GM12878 (cell line): ENCODE measurements at regions of chr11 and their contacts with region 1.

Region 1: GRCh38 chr11:1572197-1573076 is at the start of gene DUSP8:
- DNase-seq: no peak
- ATAC-seq: peak; percentile 68
- H3K4me3 ChIP-seq: no peak within 1 kb of the TSS
- H3K27ac ChIP-seq: no peak within 1 kb of the TSS
- H3K4me1 ChIP-seq: no peaks in the 10 kb centered on the region
- H3K27me3 ChIP-seq: peaks cover 3 to 10% of the 10 kb centered on the region in 2 experiments; a peak in 3 of 4 replicates
- CTCF ChIP-seq: no peak
- EP300 ChIP-seq: no peak
- POLR2A ChIP-seq: 0 out of 2 replicates have a peak, but pooled peaks have one; percentile 29
- RAD21 ChIP-seq: no peak
- polyA plus RNA-seq, gene DUSP8: not detected

Region 2: DNA sequence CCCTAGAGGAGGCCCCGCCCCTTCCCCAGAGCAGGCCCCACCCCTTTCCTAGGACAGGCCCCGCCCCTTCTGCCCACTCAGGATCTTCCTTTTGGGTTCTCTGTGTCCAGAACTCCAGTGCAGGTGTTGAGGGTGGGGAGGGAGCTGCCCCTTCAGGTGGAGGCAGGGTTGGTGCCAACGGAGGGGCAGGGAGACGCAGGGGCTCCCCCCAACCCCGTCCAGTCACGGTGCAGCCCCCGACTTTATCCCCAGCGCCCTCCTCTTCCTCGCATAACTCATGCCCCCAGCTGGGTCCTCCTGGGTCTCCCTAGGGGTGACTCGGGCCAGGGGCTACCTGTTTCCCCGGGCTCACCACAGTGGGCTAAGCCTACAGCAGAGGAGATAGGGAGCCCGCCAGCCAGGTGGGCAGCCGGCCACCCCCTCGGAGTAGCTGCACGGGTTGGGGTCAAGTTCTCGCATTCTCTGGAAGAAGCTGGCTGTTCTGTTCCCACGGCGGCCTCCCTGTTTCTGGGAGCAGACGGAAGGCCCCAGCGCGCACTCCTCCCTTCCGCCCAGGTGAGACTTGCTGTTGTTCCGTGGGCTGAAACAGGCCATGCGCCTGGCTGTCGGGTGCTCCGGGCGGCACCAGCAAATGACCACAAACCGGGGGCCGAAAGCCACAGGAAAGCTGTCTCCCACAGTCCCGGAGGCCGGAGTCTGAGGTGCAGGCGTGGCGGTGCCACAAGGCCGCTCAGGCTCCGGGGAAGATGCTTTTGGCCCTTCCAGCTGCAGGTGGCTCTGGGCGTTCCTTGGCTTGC is 458.8 kb before region 1 on chr11:
- CTCF ChIA-PET with region 1: interaction called, 4 read pairs
- POLR2A ChIA-PET with region 1: no interaction called
- RAD21 ChIA-PET with region 1: interaction called, 3 read pairs
- SMC1A ChIA-PET with region 1: interaction called, 3 read pairs
- in situ Hi-C with region 1: no loop called
- intact Hi-C with region 1: loop called (anchors 10 kb)
- DNase-seq: no peak
- ATAC-seq: no peak
- H3K4me3 ChIP-seq: no peak overlapping the region
- H3K27ac ChIP-seq: no peak overlapping the region
- H3K4me1 ChIP-seq: no peaks in the 10 kb centered on the region
- H3K27me3 ChIP-seq: no peaks in the 10 kb centered on the region
- CTCF ChIP-seq: no peak
- EP300 ChIP-seq: no peak
- POLR2A ChIP-seq: no peak
- RAD21 ChIP-seq: no peak

Region 3: DNA sequence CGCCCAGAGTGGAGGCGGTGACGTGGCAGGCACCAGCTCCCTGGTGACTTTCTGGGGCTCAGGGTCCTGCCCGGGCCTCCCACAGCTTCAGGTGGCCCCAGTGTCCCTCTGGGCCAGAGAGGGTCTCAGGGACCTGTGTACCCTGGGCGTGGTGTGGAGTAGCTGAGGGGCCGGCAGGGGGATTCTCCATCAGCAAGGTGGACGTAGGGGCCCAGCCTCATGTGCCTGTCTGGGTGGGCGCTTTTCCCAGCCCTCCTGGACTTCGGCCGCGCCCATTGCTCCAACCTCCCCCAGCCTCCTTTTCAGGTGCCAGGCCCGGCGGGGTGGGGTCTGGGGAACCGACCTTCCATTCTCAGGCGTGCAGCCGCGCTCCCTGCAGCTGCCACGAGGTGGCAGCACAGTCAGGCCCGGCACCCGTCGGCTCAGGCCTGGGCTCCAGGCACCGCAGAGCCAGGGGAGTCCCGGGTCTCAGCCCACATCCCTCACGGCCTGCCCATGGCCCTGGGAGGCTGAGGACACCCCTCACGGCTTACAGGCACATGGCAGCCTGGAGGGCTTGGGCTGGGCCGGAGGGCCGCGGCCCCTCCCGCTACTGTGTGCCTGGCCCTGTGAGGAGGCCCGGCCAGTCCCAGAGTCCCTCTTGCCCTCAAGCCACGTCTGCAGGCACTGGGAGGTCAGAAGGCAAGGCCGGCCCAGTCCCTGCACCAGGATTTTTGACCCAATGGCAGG is 369.5 kb before region 1 on chr11:
- CTCF ChIA-PET with region 1: interaction called, 12 read pairs
- POLR2A ChIA-PET with region 1: no interaction called
- RAD21 ChIA-PET with region 1: interaction called, 6 read pairs
- SMC1A ChIA-PET with region 1: interaction called, 4 read pairs
- in situ Hi-C with region 1: no loop called
- intact Hi-C with region 1: loop called (anchors 2 kb)
- DNase-seq: no peak
- ATAC-seq: peak; percentile 97
- H3K4me3 ChIP-seq: no peak overlapping the region
- H3K27ac ChIP-seq: no peak overlapping the region
- H3K4me1 ChIP-seq: no peaks in the 10 kb centered on the region
- H3K27me3 ChIP-seq: no peaks in the 10 kb centered on the region
- CTCF ChIP-seq: peak; percentile 76 to 98 (median 90)
- EP300 ChIP-seq: no peak
- POLR2A ChIP-seq: no peak
- RAD21 ChIP-seq: peak; percentile 78

Region 4: GRCh38 chr11:1309498-1310317 is 262.7 kb before region 1 on chr11 and contains the start of gene TOLLIP:
- CTCF ChIA-PET with region 1: no interaction called
- POLR2A ChIA-PET with region 1: no interaction called
- RAD21 ChIA-PET with region 1: no interaction called
- SMC1A ChIA-PET with region 1: no interaction called
- in situ Hi-C with region 1: no loop called
- intact Hi-C with region 1: loop called (anchors 10 kb)
- DNase-seq: peak; percentile 56
- ATAC-seq: peak; percentile 93
- H3K4me3 ChIP-seq: peak within 1 kb of the TSS; percentile 71
- H3K27ac ChIP-seq: peak within 1 kb of the TSS; percentile 80
- H3K4me1 ChIP-seq: peaks cover 33% of the 10 kb centered on the region
- H3K27me3 ChIP-seq: no peaks in the 10 kb centered on the region
- CTCF ChIP-seq: peak in 1 of 3 experiments; percentile 31; a peak in 2 of 6 replicates
- EP300 ChIP-seq: no peak
- POLR2A ChIP-seq: peak; percentile 97
- RAD21 ChIP-seq: no peak
- polyA plus RNA-seq, gene TOLLIP: 0.47 to 1.0 TPM

Region 5: GRCh38 chr11:1401656-1402221 is 170.7 kb before region 1 on chr11:
- CTCF ChIA-PET with region 1: no interaction called
- POLR2A ChIA-PET with region 1: no interaction called
- RAD21 ChIA-PET with region 1: no interaction called
- SMC1A ChIA-PET with region 1: no interaction called
- in situ Hi-C with region 1: no loop called
- intact Hi-C with region 1: no loop called
- DNase-seq: no peak
- ATAC-seq: peak; percentile 67
- H3K4me3 ChIP-seq: no peak overlapping the region
- H3K27ac ChIP-seq: no peak overlapping the region
- H3K4me1 ChIP-seq: no peaks in the 10 kb centered on the region
- H3K27me3 ChIP-seq: no peaks in the 10 kb centered on the region
- CTCF ChIP-seq: no peak
- EP300 ChIP-seq: no peak
- POLR2A ChIP-seq: no peak
- RAD21 ChIP-seq: no peak

Region 6: GRCh38 chr11:1453611-1454034 is 118.8 kb before region 1 on chr11:
- CTCF ChIA-PET with region 1: interaction called, 20 read pairs
- POLR2A ChIA-PET with region 1: no interaction called
- RAD21 ChIA-PET with region 1: interaction called, 3 read pairs
- SMC1A ChIA-PET with region 1: no interaction called
- in situ Hi-C with region 1: no loop called
- intact Hi-C with region 1: loop called (anchors 2 kb)
- DNase-seq: peak; percentile 2
- ATAC-seq: peak; percentile 88
- H3K4me3 ChIP-seq: no peak overlapping the region
- H3K27ac ChIP-seq: no peak overlapping the region
- H3K4me1 ChIP-seq: no peaks in the 10 kb centered on the region
- H3K27me3 ChIP-seq: no peaks in the 10 kb centered on the region
- CTCF ChIP-seq: peak; percentile 56 to 82 (median 78)
- EP300 ChIP-seq: no peak
- POLR2A ChIP-seq: no peak
- RAD21 ChIP-seq: peak; percentile 55

Region 7: GRCh38 chr11:1521382-1522080 is 50.9 kb before region 1 on chr11:
- CTCF ChIA-PET with region 1: interaction called, 9 read pairs
- POLR2A ChIA-PET with region 1: no interaction called
- RAD21 ChIA-PET with region 1: interaction called, 11 read pairs
- SMC1A ChIA-PET with region 1: interaction called, 8 read pairs
- in situ Hi-C with region 1: no loop called
- intact Hi-C with region 1: no loop called
- DNase-seq: peak; percentile 76
- ATAC-seq: peak; percentile 97
- H3K4me3 ChIP-seq: peak overlapping the region; percentile 48; the same call in 1 of the 2 replicates
- H3K27ac ChIP-seq: peak overlapping the region; percentile 62
- H3K4me1 ChIP-seq: peaks cover 10% of the 10 kb centered on the region
- H3K27me3 ChIP-seq: no peaks in the 10 kb centered on the region
- CTCF ChIP-seq: no peak
- EP300 ChIP-seq: peak in 1 of 2 experiments; percentile 64; a peak in 2 of 4 replicates
- POLR2A ChIP-seq: peak; percentile 50
- RAD21 ChIP-seq: no peak

Region 8: DNA sequence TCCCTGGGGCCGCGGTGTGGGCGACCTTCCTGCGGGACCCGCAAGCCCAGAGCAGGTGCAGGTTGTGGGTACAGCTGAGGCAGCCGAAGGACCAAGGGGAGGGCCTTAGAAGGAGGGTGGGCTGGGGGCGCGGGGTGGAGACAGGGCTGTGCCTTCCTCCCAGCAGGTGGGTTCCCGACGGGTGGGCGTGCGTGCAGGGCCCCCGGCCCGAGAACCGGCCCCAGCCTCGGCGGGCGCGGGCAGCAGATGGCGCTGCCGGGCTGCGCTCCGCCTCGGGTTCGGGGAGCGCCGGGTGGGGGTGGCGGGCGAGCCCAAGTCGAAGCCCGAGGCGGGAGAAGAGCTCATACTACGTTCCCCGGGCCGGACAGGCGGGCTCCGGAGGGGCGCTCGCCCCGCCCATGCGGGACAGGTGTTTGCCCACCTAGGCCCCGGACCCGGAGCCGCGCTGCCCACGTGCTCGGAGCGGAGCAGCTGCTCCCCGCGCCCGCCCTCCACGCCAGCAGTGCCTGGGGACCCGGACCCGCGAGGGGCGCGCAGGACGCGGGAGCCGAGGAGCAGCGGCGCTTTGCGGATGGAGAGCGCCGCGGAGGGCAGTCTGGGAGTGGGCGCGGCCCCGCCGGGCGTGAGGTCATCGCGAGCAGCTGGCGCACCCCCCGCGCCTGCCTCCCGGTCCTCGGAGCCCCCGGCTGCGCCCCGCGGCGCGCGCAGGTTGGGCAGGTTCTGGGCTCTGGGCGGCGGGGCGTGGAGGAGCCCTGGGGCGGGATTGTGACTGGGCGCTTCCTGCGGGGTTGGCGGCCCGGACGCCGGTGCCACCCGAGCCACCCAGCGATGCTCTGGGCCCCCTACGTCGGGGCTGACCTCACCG is 25.7 kb before region 1 on chr11:
- CTCF ChIA-PET with region 1: interaction called, 10 read pairs
- POLR2A ChIA-PET with region 1: no interaction called
- RAD21 ChIA-PET with region 1: interaction called, 23 read pairs
- SMC1A ChIA-PET with region 1: interaction called, 8 read pairs
- in situ Hi-C with region 1: no loop called
- intact Hi-C with region 1: no loop called
- DNase-seq: no peak
- ATAC-seq: peak; percentile 81
- H3K4me3 ChIP-seq: no peak overlapping the region
- H3K27ac ChIP-seq: no peak overlapping the region
- H3K4me1 ChIP-seq: no peaks in the 10 kb centered on the region
- H3K27me3 ChIP-seq: peaks cover 0 to 4% of the 10 kb centered on the region in 2 experiments; a peak in 2 of 4 replicates
- CTCF ChIP-seq: peak; percentile 43 to 53 (median 48); a peak in 5 of 6 replicates
- EP300 ChIP-seq: no peak
- POLR2A ChIP-seq: no peak
- RAD21 ChIP-seq: peak; percentile 50